ENCODE measurements at regions of chr10 and their contacts with region 1.

Region 1: DNA sequence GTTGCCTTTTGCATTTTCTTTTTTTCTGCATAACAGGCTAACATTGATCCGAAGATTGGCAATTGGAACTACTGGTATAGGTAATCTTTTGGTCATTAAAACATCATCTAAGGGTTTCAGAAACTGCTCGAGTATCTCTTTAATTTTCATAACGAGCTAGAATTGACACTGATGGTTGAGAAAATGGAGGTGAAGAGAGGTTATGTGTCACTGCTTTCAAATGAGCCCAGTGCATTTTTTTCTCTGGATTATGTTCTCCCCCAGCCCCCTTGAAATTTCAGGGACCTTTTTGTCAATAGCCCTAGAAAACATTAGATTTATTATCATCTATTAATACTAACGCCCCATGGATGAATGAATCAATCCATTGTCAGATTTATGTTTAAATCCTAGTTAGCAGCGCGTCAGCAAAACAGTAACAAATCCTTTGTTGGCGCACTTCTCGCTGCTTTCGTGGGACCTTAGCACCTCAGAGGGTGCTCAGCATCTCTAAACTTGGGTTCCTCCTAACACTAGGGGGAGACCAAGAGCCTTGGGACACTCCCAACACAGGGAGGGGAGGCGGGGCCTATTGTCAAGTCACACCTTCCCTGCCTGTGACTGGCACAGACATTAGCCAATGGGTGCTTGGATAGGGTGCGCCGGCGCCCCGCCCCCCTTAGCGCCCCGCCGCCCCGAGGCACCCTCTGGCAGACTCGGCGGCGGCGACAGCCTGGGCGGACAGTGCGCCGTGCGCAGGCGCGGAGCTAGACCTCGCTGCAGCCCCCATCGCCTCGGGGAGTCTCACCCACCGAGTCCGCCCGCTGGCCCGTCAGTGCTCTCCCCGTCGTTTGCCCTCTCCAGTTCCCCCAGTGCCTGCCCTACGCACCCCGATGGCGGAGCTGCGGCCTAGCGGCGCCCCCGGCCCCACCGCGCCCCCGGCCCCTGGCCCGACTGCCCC is at the start of gene SUFU:
- DNase-seq: peak; percentile 88 to 99
- ATAC-seq: peak; percentile 64 to 79
- H3K4me3 ChIP-seq: peak within 1 kb of the TSS; percentile 82
- H3K27ac ChIP-seq: peak within 1 kb of the TSS; percentile 87 to 95
- H3K4me1 ChIP-seq: peaks cover 17% of the 10 kb centered on the region; the same call in 2 of the 3 replicates
- CTCF ChIP-seq: peak; percentile 88
- EP300 ChIP-seq: no peak
- POLR2A ChIP-seq: peak; percentile 96
- RAD21 ChIP-seq: peak; percentile 75 to 78
- polyA plus RNA-seq, gene SUFU: 3.7 and 4.5 TPM in 2 replicates

Region 2: DNA sequence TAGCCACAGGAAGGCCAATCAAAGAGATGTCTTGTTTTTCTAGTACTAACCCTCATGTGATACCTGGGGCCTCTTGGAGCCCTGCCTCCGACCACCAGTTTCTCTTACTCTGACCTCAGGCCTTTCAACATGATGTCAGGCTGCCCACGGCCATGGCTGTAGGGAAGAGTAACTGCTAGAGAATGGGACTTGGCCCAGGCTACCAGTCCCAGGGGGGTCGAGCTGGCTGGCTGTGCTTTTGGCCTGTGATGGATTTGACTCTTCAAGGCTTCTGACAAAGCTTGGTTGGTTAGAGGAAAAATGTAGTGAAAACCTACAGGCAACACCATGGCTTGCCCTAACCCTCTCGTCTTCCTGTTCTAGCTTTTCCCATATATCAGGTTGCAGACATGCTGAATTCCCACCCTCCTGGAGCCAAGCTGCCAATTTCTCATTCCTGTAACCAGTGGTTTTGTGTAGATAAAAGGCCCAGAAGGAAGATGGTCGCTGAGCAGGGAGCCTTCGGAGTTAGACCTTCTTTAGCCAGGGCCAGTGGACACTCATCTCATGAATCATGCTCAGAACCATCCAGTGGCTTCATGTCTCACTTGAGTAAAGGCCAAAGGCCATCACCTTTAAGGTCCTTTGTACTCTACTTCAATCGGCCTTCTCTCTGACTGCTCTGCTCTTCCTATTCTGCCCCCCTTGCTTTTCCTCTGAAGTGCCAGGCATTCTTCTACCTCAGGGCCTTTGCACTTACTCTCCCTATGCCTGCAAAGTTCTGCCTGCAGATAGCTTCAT is 19.9 kb after region 1 on chr10:
- CTCF ChIA-PET with region 1: interaction called, 22 read pairs
- POLR2A ChIA-PET with region 1: no interaction called
- DNase-seq: no peak
- ATAC-seq: no peak
- H3K4me3 ChIP-seq: no peak overlapping the region
- H3K27ac ChIP-seq: no peak overlapping the region
- H3K4me1 ChIP-seq: no peaks in the 10 kb centered on the region
- CTCF ChIP-seq: no peak
- EP300 ChIP-seq: no peak
- POLR2A ChIP-seq: no peak
- RAD21 ChIP-seq: no peak

Region 3: GRCh38 chr10:102596506-102596971 is 93.0 kb after region 1 on chr10:
- CTCF ChIA-PET with region 1: interaction called, 24 read pairs
- POLR2A ChIA-PET with region 1: interaction called, 5 read pairs
- DNase-seq: peak; percentile 66 to 75
- ATAC-seq: peak; percentile 89 to 96
- H3K4me3 ChIP-seq: no peak overlapping the region
- H3K27ac ChIP-seq: peak overlapping the region in 1 of 2 experiments; percentile 38; a peak in 2 of 6 replicates
- H3K4me1 ChIP-seq: 0 out of 3 replicates have a peak, but pooled peaks cover 3% of the 10 kb centered on the region
- CTCF ChIP-seq: peak; percentile 68
- EP300 ChIP-seq: no peak
- POLR2A ChIP-seq: no peak
- RAD21 ChIP-seq: peak; percentile 62 to 74; a peak in 4 of 5 replicates